ENCODE measurements at regions of chr12 and their contacts with region 1.

Region 1: GRCh38 chr12:58850826-58851225 is 69.5 kb downstream of the LRIG3 start:
- DNase-seq: no peak
- H3K4me3 ChIP-seq: no peak overlapping the region
- H3K27ac ChIP-seq: no peak overlapping the region
- H3K4me1 ChIP-seq: no peaks in the 10 kb centered on the region
- H3K27me3 ChIP-seq: no peaks in the 10 kb centered on the region
- CTCF ChIP-seq: no peak
- POLR2A ChIP-seq: no peak

Region 2: DNA sequence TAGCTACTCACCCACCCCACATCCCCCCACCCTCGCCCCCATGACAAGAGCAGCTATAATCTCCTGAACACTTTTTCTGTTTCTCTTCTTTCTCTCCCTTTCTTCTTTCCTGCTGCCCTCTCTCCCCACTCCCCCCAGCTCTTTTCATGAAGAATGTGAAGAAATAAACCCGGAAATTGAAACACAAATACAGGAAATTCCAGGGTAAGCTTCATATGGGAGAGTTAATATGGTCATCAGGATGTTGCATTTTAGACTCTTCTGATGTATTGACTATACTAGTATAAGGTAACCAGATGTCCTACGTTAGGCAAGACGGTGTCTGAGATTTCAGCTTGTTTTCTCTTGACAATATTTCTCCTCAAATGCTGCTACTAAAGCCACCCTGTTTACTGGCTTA is 111.1 kb after region 1 on chr12:
- intact Hi-C with region 1: loop called (anchors 5 kb)
- DNase-seq: no peak
- H3K4me3 ChIP-seq: no peak overlapping the region
- H3K27ac ChIP-seq: no peak overlapping the region
- H3K4me1 ChIP-seq: no peaks in the 10 kb centered on the region
- H3K27me3 ChIP-seq: no peaks in the 10 kb centered on the region
- CTCF ChIP-seq: no peak
- POLR2A ChIP-seq: no peak